Astrocyte of the cerebellum (primary cell): ENCODE measurements at regions of chr20 and their contacts with region 1.

Region 1: GRCh38 chr20:24289737-24290481 is 179.5 kb upstream of the SYNDIG1 start:
- DNase-seq: peak; percentile 12
- H3K4me3 ChIP-seq: no peak overlapping the region
- CTCF ChIP-seq: peak; percentile 8

Region 2: DNA sequence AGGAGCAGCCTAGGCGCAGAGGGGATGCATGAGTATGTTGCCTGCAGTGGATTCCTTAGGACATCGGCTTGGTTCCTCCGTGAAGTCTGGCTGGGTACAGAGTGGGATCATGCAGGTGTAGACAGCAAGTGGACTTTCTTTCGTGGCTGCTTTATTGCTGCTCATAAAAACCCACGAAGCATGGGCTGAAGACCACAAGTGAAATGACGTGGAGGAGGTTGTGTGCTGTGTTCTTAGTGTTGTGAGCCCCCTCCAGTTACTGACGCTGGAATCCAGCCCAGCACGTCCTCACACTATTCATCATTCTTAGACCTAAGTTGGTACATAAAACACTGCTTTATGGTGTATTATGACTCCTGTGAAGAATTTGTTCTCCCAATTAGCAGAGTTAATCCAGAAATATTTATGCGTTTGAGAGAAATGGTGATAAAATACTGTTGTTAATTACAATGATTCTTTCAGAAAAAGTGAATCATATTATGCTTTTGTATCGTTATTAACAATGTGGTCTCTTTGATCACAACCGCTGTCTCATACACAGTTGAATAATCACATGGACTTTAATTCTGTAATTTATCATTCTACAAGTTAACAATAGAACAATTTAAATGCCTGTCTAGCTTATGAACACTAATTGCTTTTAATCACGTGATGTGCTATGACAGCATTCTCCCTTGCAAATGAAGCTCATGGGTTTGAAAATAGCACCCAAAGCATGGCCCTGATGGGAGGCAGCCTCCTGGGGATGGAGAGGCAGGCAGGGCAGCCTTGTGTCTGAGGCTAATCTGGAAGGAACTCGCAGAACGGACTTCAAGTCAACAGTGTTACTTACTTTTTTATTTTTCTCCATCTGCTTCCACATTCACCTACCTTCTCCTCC is 54.4 kb before region 1 on chr20:
- in situ Hi-C with region 1: no loop called
- DNase-seq: peak; percentile 34
- H3K4me3 ChIP-seq: no peak overlapping the region
- CTCF ChIP-seq: no peak

Region 3: GRCh38 chr20:24257171-24257570 is 32.7 kb before region 1 on chr20:
- in situ Hi-C with region 1: no loop called
- DNase-seq: peak; percentile 2
- H3K4me3 ChIP-seq: no peak overlapping the region
- CTCF ChIP-seq: no peak

Region 4: DNA sequence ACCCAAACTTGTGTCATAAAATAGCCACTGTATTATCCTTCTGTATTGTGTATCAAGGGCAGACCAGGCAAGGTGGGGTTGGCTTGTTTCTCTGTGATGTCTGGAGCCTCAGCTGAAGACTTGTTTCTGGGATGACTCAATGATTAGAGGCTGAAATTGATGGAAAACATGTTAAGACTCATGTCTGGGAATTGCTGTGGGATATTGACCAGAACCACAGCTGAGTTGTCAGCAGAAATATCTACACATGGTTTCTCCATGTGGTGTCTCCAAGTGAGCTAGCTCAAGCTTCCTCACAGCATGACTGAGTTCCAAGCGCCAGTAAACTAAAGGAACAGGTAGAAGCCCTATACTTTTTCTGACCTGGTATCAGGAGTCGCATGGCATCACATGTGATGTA is 51.0 kb after region 1 on chr20:
- in situ Hi-C with region 1: loop called (anchors 5 kb)
- DNase-seq: no peak
- H3K4me3 ChIP-seq: no peak overlapping the region
- CTCF ChIP-seq: no peak

Region 5: DNA sequence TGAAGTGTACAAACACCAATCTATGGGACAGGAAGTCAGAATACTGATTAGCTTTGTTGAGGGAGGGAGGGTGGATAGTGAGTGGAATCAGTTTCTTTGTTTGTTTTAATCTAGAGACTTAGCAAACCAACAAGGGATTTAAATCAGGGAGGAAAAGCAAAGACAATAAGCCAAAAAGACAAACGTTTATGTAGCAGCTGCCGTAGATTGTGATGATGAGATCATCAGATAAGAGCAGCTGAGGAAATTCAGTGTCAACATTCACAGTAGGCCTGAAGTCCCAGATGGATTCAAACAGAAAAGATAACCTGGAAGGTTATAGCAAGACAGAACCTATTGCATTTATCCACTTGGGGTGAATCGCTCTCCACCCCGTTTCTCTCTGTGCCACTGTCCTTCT is 74.6 kb after region 1 on chr20:
- in situ Hi-C with region 1: no loop called
- DNase-seq: no peak
- H3K4me3 ChIP-seq: no peak overlapping the region
- CTCF ChIP-seq: no peak